HEK293 (cell line): ENCODE measurements at regions of chr1 and their contacts with region 1.

Region 1: GRCh38 chr1:29332204-29332603 is 95.9 kb downstream of the PTPRU start:
- H3K4me3 ChIP-seq: no peak overlapping the region
- H3K27ac ChIP-seq: no peak overlapping the region
- H3K4me1 ChIP-seq: no peaks in the 10 kb centered on the region
- CTCF ChIP-seq: peak; percentile 35; the same call in 1 of the 2 replicates

Region 2: DNA sequence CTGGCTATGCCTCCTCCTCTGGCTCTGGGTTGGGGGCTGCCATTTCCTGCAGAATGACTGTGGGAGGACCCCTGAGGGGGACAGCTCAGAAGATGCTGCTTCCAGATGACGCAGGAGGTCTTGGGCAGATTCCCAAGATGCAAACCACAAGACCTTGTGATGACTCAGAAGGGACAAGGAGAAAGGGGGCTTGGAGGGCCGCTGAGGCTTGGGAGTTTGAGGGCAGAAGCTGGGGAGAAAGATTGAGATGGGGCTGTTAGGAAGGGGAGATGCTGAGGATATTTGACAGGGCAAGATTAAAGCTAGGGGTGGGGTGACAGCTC is 88.4 kb before region 1 on chr1:
- CTCF ChIA-PET with region 1: interaction called, 12 read pairs
- POLR2A ChIA-PET with region 1: no interaction called
- H3K4me3 ChIP-seq: no peak overlapping the region
- H3K27ac ChIP-seq: no peak overlapping the region
- H3K4me1 ChIP-seq: peaks cover under 1% of the 10 kb centered on the region; the same call in 1 of the 2 replicates
- CTCF ChIP-seq: no peak

Region 3: GRCh38 chr1:29513357-29513756 is 181.2 kb after region 1 on chr1:
- CTCF ChIA-PET with region 1: no interaction called
- POLR2A ChIA-PET with region 1: no interaction called
- H3K4me3 ChIP-seq: no peak overlapping the region
- H3K27ac ChIP-seq: no peak overlapping the region
- H3K4me1 ChIP-seq: no peaks in the 10 kb centered on the region
- CTCF ChIP-seq: no peak